Psoas muscle (tissue), 8 donors: ENCODE measurements at regions of chr16 and their contacts with region 1.

Region 1: GRCh38 chr16:66961065-66961744 is at the start of gene CES3:
- DNase-seq: peak; percentile 53 to 72
- ATAC-seq: peak; percentile 69 to 83 (median 80)
- H3K4me3 ChIP-seq: no peak within 1 kb of the TSS
- H3K27ac ChIP-seq: no peak within 1 kb of the TSS
- H3K4me1 ChIP-seq: peaks cover 13% of the 10 kb centered on the region
- H3K27me3 ChIP-seq: no peaks in the 10 kb centered on the region
- CTCF ChIP-seq: peak; percentile 53
- total RNA-seq, gene CES3: 9.7 to 15.2 (median 13.5) TPM

Region 2: DNA sequence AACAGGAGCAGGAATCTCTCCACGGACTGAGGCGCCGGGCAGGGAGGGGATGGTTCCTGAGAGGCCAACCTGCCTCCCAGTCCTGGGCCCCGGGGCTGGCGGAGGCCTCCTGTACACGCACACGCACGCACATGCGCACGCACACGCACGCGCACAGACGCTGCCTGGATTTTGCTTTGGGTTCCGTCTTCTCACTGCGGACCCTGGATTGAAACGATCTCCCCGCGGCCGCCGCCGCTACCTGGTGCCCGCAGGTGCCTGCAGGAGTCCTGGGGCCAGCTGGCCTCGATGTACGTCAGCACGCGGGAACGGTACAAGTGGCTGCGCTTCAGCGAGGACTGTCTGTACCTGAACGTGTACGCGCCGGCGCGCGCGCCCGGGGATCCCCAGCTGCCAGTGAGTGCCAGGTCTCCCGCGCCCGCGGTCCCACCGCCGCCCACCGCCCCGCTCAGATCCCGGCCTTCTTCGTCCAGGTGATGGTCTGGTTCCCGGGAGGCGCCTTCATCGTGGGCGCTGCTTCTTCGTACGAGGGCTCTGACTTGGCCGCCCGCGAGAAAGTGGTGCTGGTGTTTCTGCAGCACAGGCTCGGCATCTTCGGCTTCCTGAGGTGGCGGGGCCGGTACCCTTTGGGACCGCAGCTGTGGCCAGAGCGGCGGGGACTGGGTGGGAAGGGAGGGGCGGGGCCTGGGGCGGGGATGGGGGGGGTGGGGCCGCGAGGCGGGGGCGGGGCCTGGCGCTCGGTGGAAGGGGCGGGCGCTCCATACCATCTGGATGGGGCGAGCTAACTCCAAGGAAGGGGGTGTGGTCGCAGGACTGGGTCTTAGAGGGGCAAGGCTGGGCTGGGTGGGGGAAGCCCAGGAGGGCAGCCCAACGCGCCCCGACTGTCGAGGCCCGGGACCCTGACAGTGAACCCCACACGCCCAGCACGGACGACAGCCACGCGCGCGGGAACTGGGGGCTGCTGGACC is 39.5 kb after region 1 on chr16:
- intact Hi-C with region 1: loop called in 1 of 2 experiments (anchors 5 kb)
- DNase-seq: peak; percentile 57 to 73
- ATAC-seq: peak; percentile 28 to 41 (median 34)
- H3K4me3 ChIP-seq: peak overlapping the region; percentile 67
- H3K27ac ChIP-seq: peak overlapping the region; percentile 1
- H3K4me1 ChIP-seq: peaks cover 9% of the 10 kb centered on the region
- H3K27me3 ChIP-seq: no peaks in the 10 kb centered on the region
- CTCF ChIP-seq: no peak